ENCODE measurements at regions of chr7 and their contacts with region 1.

Region 1: DNA sequence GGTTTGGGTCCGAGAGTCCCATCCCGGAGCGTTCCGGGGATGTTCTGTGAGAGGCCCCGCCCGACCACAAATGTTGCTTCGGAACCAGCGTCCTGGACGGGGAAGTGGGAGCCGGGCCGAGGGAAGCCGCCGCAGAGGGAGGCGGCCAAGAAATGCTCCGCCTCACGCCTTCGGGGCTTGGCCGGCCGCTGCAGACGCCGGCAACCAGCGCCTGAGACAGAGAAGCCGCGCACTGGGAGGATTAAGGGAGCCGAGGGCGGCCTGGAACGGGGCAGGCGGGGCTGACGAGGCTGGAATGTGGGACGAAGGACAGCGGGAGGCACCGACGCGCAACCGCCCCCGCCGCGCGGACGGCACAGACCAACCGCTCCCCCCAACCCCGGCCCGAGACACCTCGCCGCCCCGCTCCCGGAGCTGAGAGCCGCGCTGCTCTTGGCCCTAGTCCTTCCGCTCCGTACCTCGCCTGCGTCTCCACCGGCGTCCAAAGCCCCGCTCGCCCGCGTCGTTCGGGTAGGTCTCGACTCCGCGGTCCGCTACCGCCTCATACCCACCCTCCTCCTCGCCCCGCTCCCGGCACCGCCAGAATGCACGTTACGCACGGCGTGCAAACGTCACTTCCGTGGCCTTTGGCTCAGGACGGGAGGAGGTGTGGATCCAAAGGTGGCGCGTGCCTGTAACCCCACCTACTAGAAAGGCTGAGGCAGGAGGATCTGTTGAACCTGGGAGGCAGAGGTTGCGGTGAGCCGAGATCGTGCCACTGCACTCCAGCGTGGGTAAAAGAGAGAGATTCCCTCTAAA is 36.7 kb upstream of the KCTD7 start:
- DNase-seq: peak; percentile 87
- H3K4me3 Mint-ChIP-seq: peak overlapping the region; percentile 96
- H3K27ac Mint-ChIP-seq: peak overlapping the region; percentile 93
- H3K4me1 Mint-ChIP-seq: peaks cover 46% of the 10 kb centered on the region
- H3K27me3 Mint-ChIP-seq: peaks cover 3% of the 10 kb centered on the region

Region 2: DNA sequence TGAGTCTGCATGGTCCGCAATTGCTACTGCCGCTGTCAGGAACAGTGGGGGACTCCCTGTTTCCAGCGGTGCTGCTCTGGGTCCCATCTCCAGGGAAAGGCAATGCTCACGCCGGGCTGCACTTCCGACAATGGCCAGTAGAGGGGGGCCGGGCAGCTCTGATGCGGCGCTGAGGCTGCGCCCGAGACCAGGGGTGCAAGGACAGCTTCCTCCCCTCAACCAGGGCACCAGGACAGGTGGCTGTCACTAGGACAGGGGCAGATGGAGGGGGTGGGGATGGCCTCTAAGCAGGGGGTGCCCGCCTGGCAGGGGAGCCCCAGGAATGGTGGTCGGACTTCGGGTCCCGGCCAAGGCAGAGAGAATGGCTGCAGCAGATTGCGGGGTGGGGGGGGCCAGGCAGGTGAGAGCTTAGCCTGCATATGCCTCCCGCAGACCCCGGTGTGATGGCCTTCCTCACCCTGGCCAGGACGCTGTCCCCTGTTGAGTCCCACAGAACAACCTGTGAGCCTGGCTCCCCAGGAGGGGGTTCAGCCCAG is 34.3 kb before region 1 on chr7:
- intact Hi-C with region 1: loop called (anchors 1 kb)
- DNase-seq: peak; percentile 62
- H3K4me3 Mint-ChIP-seq: no peak overlapping the region
- H3K27ac Mint-ChIP-seq: no peak overlapping the region
- H3K4me1 Mint-ChIP-seq: no peaks in the 10 kb centered on the region
- H3K27me3 Mint-ChIP-seq: no peaks in the 10 kb centered on the region

Region 3: DNA sequence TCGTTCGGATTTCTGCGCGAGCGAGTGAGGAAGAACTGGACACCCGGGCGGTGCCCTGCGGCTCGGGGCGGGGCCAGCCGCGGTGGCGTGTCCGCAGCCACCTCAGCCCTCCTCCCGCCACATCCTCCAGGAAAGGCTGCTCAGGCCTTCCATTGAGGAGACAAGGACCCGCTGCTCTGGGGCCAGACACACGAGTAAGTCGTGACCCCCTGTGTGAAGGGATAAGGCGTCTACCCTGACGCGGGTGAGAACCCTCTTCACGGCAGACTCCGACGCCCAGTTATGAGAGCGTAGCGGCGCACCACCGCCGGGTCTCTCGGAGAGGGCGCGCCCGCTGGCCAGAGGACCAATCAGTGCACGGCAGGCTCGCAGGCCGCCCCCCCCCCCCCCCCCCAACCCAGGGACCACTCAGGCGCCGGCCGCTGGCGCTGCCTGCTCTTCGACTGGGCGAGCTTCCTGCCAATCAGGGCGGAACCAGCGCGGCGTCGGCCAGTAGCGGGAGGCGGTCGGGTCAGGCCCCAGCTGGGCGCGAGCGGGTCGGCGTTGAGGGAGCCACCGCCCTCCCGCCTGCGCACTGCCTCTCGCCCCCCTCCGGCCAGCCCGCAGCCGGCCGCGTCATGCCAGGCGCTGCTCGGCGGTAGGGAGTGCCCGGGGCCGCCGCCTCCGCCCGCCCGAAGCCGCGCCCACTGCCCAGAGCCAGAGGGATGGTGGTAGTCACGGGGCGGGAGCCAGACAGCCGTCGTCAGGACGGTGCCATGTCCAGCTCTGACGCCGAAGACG is 36.6 kb after region 1 on chr7 and contains the start of gene KCTD7:
- intact Hi-C with region 1: loop called (anchors 1 kb)
- DNase-seq: peak; percentile 94
- H3K4me3 Mint-ChIP-seq: peak within 1 kb of the TSS; percentile 90
- H3K27ac Mint-ChIP-seq: peak within 1 kb of the TSS; percentile 83
- H3K4me1 Mint-ChIP-seq: peaks cover 39% of the 10 kb centered on the region
- H3K27me3 Mint-ChIP-seq: no peaks in the 10 kb centered on the region
- total RNA-seq, gene KCTD7: 11.0 and 13.8 TPM in 2 replicates

Region 4: DNA sequence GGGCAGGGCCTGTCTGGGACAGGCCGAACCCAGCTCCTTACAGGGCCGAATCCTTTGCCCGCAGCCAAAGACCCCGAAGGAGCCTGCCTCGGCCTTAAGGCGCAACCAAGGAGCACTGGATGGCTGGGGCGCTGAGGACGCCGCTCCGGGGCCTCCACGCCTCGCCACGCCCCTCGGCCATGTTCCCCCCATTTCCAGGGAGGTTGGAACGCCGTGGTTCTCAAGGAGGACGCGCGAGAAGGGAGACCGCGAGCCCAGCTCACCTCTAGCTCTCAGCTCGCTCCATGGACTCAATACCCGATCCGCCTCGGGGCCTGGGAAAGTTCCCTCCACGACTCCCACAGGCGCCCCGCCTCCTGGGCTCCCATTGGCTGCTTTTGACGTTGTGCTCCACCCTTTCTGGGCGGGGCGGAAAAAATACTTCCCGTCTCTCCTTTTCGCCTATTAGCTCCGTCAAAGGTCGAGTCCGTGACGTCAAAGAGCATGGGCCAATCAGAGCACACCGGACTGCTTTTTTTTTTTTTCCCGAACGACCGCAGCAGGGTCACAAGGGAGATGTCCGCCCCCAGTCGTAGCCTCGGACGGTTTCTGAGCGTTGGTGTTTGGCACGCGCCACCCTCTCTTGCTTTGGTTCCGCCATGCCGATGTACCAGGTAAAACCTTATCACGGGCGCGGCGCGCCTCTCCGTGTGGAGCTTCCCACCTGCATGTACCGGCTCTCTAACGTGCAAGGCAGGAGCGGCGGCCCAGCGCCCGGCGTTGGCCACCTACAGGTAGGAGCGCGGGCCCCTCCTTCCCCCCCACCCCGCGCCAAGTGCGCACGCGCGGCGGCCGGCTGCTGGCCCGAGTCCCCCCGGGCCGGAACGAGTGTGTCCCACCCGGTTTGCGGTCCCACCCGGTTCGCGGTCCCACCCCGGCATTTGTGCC is 710.4 kb after region 1 on chr7:
- intact Hi-C with region 1: loop called (anchors 10 kb)
- DNase-seq: peak; percentile 97
- H3K4me3 Mint-ChIP-seq: peak overlapping the region; percentile 88
- H3K27ac Mint-ChIP-seq: peak overlapping the region; percentile 91
- H3K4me1 Mint-ChIP-seq: peaks cover 21% of the 10 kb centered on the region
- H3K27me3 Mint-ChIP-seq: peaks cover 4% of the 10 kb centered on the region